Activated B cell treated with CpG ODN at 0.5 μM for 24 hours (primary cell): ENCODE measurements at regions of chr5 and their contacts with region 1.

Region 1: GRCh38 chr5:172293054-172293744 is 9.6 kb upstream of the UBTD2 start:
- DNase-seq: peak; percentile 21
- ATAC-seq: peak; percentile 100
- H3K4me3 Mint-ChIP-seq: no peak overlapping the region
- H3K27ac Mint-ChIP-seq: no peak overlapping the region
- H3K4me1 Mint-ChIP-seq: peaks cover 2% of the 10 kb centered on the region
- H3K27me3 Mint-ChIP-seq: peaks cover 3% of the 10 kb centered on the region
- CTCF ChIP-seq: peak; percentile 67

Region 2: DNA sequence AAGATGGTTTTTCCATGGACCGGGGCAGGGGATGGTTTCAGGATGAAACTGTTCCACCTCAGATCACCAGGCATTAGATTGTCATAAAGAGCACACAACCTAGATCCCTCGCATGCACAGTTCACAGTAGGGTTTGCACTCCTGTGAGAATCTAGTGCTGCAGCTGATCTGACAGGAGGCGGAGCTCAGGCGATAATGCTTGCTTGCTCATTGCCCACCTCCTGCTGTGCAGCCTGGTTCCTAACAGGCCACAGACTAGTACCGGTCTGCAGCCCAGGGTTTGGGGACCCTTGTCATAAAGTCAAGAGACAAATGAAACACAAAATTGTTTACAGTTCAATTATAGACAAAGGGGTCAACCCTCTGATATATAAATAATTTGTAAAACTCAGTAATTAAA is 1329.7 kb before region 1 on chr5:
- CTCF ChIA-PET with region 1: no interaction called
- POLR2A ChIA-PET with region 1: no interaction called
- intact Hi-C with region 1: no loop called
- DNase-seq: no peak
- ATAC-seq: no peak
- H3K4me3 Mint-ChIP-seq: no peak overlapping the region
- H3K27ac Mint-ChIP-seq: no peak overlapping the region
- H3K4me1 Mint-ChIP-seq: no peaks in the 10 kb centered on the region
- H3K27me3 Mint-ChIP-seq: no peaks in the 10 kb centered on the region
- CTCF ChIP-seq: no peak

Region 3: DNA sequence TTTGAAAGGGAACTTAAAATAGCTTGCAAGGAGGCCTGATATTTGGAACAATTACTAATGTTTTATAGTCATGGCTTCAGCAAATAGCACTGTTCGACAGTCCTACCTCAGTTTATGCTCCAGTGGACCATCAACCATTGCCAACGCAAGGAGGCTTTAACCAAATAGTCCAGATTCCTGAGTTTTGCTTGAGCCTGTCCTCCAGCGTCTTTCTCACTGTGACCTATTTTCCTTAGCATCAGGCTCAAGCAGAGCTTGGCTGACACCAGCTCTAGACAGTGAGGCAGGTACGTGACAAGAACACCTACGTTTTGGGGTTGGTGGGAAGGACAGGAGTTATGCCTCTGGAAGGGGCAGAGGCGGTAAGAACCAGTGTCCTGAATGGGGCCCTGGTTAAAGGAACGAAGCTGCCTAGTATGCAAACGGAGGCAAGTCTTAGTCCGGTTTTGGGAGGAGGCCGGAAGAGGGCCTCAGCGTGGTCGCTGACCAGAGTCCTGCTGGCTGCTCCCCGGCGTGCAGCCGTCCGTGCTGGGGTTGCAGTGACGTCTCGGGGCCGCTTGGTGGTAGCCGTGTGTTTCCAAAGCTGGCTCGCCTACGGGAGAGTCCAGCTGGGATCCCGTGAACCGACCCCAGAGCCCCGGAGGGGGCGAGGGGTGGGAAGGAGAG is 874.8 kb before region 1 on chr5:
- CTCF ChIA-PET with region 1: interaction called, 3 read pairs
- POLR2A ChIA-PET with region 1: no interaction called
- intact Hi-C with region 1: loop called (anchors 1 kb)
- DNase-seq: peak; percentile 42
- ATAC-seq: peak; percentile 67
- H3K4me3 Mint-ChIP-seq: peak overlapping the region; percentile 71
- H3K27ac Mint-ChIP-seq: no peak overlapping the region
- H3K4me1 Mint-ChIP-seq: peaks cover 20% of the 10 kb centered on the region
- H3K27me3 Mint-ChIP-seq: peaks cover 20% of the 10 kb centered on the region
- CTCF ChIP-seq: peak; percentile 49

Region 4: DNA sequence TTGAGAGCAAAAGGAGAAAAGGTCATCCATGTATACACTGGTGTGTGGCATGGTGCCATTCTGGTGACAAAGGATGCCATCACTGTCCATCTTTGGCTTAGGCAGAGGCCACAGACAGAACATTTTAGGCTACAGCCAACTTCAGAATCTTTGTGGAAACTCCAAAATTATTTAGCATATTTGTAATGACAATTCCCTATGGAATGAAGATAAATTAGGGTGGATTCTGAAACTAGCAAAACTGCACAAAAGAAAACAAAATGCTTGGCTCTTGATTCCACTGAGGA is 379.3 kb before region 1 on chr5:
- CTCF ChIA-PET with region 1: interaction called, 16 read pairs
- POLR2A ChIA-PET with region 1: no interaction called
- intact Hi-C with region 1: loop called (anchors 1 kb)
- DNase-seq: no peak
- ATAC-seq: no peak
- H3K4me3 Mint-ChIP-seq: no peak overlapping the region
- H3K27ac Mint-ChIP-seq: peak overlapping the region; percentile 36
- H3K4me1 Mint-ChIP-seq: peaks cover 71% of the 10 kb centered on the region
- H3K27me3 Mint-ChIP-seq: no peaks in the 10 kb centered on the region
- CTCF ChIP-seq: no peak

Region 5: GRCh38 chr5:172035039-172035438 is 258.2 kb before region 1 on chr5:
- CTCF ChIA-PET with region 1: interaction called, 3 read pairs
- POLR2A ChIA-PET with region 1: no interaction called
- intact Hi-C with region 1: loop called (anchors 1 kb)
- DNase-seq: no peak
- ATAC-seq: peak; percentile 62
- H3K4me3 Mint-ChIP-seq: no peak overlapping the region
- H3K27ac Mint-ChIP-seq: peak overlapping the region; percentile 18
- H3K4me1 Mint-ChIP-seq: peaks cover 16% of the 10 kb centered on the region
- H3K27me3 Mint-ChIP-seq: no peaks in the 10 kb centered on the region
- CTCF ChIP-seq: no peak

Region 6: GRCh38 chr5:172059661-172060100 is 233.5 kb before region 1 on chr5:
- CTCF ChIA-PET with region 1: interaction called, 4 read pairs
- POLR2A ChIA-PET with region 1: no interaction called
- intact Hi-C with region 1: loop called (anchors 5 kb)
- DNase-seq: no peak
- ATAC-seq: no peak
- H3K4me3 Mint-ChIP-seq: no peak overlapping the region
- H3K27ac Mint-ChIP-seq: no peak overlapping the region
- H3K4me1 Mint-ChIP-seq: no peaks in the 10 kb centered on the region
- H3K27me3 Mint-ChIP-seq: no peaks in the 10 kb centered on the region
- CTCF ChIP-seq: no peak

Region 7: DNA sequence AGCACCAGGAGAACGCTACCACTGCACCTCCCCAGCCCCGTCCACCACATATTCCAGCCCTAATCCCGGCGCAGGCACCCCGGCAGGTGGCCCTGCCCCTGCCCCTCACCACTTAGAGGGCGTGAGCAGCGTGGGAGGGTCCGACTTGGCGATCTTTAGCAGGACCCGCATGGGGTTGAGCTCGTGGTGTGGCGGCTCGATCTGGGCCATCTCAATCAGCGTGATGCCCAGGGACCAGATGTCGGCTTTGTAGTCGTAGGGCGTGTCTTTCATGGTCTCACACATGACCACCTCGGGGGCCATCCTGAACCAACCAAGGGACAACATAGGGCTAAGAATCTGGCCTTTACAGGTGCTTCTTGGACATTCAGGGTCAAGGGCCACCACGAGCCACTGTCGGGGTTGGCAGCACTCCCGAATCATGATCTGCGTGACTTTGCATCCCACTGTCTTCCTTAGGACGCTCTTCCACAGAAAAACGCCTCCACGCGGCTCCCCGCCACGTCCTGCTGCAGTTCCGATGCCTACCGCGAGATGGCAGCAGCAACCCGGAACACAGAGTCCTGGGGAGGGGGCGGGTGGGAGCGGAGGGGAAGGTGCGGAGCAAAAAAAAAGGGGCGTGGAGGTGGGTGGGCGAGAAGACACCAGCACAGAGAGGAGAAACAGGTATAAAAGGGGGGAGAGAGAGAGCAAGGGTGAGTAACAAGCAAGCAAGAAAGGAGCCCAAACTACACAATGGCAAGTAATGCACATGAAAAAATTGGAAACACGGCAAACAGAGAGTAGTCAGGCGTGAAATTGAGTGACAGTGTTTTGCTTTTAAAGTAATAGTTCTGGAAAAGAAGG is 186.5 kb before region 1 on chr5:
- CTCF ChIA-PET with region 1: interaction called, 16 read pairs
- POLR2A ChIA-PET with region 1: no interaction called
- intact Hi-C with region 1: loop called (anchors 1 kb)
- DNase-seq: peak; percentile 71
- ATAC-seq: no peak
- H3K4me3 Mint-ChIP-seq: no peak overlapping the region
- H3K27ac Mint-ChIP-seq: peak overlapping the region; percentile 68
- H3K4me1 Mint-ChIP-seq: peaks cover 41% of the 10 kb centered on the region
- H3K27me3 Mint-ChIP-seq: no peaks in the 10 kb centered on the region
- CTCF ChIP-seq: peak; percentile 34